ENCODE measurements at regions of chr3 and their contacts with region 1.

Region 1: DNA sequence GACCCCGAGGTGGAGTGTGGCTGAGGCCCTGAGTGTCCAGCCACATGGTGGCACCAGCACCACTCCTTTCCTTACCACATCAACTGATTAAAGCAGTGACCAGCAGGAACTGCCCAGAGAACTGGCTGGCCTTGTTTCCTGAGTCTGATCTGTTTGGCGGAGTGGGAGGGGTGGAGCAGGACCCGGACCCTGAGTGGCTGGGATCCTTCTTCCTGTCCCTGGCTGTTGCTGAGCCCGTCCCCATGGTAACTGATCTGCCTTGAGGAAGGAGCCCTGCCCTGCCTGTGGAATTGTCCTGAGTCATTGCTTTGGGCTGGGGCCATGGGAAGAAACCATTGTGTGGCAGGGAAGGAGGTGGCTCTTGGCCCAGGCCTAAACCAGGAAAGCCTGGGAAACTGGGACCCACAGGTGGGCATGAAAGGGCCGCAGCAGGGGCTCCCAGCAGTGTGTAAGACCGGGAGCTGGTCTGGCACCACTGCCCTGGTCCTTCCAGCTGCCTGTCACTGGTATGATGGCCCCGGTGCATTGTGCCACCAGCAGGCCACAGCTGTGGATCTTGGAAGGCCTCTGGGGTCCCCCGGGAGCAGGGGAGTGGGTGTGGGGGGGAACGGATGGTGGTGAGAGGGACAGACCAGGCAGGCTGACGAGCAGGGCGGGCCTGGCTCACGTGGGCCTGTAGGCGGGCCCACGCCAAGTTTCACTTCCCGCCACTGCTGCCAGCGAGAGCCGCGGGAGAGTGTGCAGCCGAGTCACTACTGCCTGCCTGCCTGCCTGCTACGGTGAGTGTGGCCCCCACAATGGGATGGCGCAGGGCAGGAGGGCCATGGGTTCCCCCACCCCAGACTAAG is 19.2 kb downstream of the ATRIP start:
- DNase-seq: peak; percentile 97
- H3K4me3 ChIP-seq: peak overlapping the region; percentile 45 to 68
- H3K27ac ChIP-seq: peak overlapping the region; percentile 99 to 100
- H3K4me1 ChIP-seq: peaks cover 16 to 67% of the 10 kb centered on the region in 2 experiments; a peak in 2 of 4 replicates
- H3K27me3 ChIP-seq: no peaks in the 10 kb centered on the region
- CTCF ChIP-seq: peak; percentile 79
- EP300 ChIP-seq: peak in 1 of 2 experiments; percentile 58; a peak in 3 of 4 replicates
- RAD21 ChIP-seq: peak; percentile 94

Region 2: GRCh38 chr3:48425218-48426075 is 40.3 kb before region 1 on chr3:
- CTCF ChIA-PET with region 1: no interaction called
- POLR2A ChIA-PET with region 1: no interaction called
- DNase-seq: peak; percentile 36
- H3K4me3 ChIP-seq: no peak overlapping the region
- H3K27ac ChIP-seq: no peak overlapping the region; a peak in 1 of 4 replicates
- H3K4me1 ChIP-seq: peaks cover 7 to 62% of the 10 kb centered on the region in 2 experiments; a peak in 2 of 4 replicates
- H3K27me3 ChIP-seq: no peaks in the 10 kb centered on the region
- CTCF ChIP-seq: no peak
- EP300 ChIP-seq: no peak
- RAD21 ChIP-seq: no peak

Region 3: DNA sequence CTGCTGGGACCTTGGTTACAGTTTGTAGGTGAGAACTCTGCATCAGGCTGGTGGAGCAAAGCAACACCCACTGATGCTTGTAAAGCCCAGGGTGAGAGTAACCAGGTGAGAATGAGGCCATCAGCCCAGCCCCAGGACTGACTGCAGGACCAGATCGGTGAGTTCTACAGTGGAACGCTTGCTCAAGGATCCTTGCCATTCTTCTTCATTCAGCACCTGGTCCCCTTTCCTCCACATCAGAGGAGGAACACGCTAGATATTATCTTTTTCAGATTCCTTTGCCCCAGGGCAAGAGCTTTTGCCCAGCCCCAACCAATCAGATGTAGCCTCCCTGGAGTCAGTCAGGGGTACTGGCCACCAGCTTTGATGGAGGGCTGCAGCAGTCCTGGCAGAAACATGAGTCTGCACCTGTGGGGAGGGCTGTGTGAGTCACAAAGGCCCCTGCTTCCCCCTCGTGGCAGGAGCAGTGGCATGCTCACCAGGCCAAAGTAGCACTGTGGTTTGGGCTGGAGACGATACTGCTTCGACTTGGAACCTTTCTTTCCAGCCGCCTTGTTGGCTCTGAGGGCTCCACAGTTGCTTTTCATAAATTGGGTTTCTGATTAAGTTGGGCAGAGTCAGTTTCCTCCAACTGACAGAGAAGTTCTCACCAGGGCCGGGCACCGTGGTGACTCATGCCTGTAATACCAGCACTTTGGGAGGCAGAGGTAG is 41.8 kb after region 1 on chr3:
- CTCF ChIA-PET with region 1: interaction called, 57 read pairs
- POLR2A ChIA-PET with region 1: interaction called, 7 read pairs
- DNase-seq: peak; percentile 86
- H3K4me3 ChIP-seq: 0 out of 4 replicates have a peak overlapping the region, but pooled peaks of 1 of the 2 experiments have one; percentile 1
- H3K27ac ChIP-seq: peak overlapping the region; percentile 29 to 58
- H3K4me1 ChIP-seq: peaks cover 14 to 30% of the 10 kb centered on the region in 2 experiments; a peak in 2 of 4 replicates
- H3K27me3 ChIP-seq: no peaks in the 10 kb centered on the region
- CTCF ChIP-seq: peak; percentile 58
- EP300 ChIP-seq: peak in 1 of 2 experiments; percentile 25; a peak in 1 of 4 replicates
- RAD21 ChIP-seq: peak; percentile 89

Region 4: GRCh38 chr3:48556793-48557626 is 91.3 kb after region 1 on chr3 and contains the start of gene PFKFB4:
- CTCF ChIA-PET with region 1: interaction called, 136 read pairs
- POLR2A ChIA-PET with region 1: no interaction called
- DNase-seq: peak; percentile 99
- H3K4me3 ChIP-seq: peak within 1 kb of the TSS; percentile 57 to 77
- H3K27ac ChIP-seq: peak within 1 kb of the TSS; percentile 48 to 49
- H3K4me1 ChIP-seq: peaks cover 29 to 61% of the 10 kb centered on the region in 2 experiments; a peak in 3 of 4 replicates
- H3K27me3 ChIP-seq: no peaks in the 10 kb centered on the region
- CTCF ChIP-seq: no peak
- EP300 ChIP-seq: no peak
- RAD21 ChIP-seq: no peak
- polyA plus RNA-seq, gene PFKFB4: 5.7 and 6.7 TPM in 2 replicates

Region 5: DNA sequence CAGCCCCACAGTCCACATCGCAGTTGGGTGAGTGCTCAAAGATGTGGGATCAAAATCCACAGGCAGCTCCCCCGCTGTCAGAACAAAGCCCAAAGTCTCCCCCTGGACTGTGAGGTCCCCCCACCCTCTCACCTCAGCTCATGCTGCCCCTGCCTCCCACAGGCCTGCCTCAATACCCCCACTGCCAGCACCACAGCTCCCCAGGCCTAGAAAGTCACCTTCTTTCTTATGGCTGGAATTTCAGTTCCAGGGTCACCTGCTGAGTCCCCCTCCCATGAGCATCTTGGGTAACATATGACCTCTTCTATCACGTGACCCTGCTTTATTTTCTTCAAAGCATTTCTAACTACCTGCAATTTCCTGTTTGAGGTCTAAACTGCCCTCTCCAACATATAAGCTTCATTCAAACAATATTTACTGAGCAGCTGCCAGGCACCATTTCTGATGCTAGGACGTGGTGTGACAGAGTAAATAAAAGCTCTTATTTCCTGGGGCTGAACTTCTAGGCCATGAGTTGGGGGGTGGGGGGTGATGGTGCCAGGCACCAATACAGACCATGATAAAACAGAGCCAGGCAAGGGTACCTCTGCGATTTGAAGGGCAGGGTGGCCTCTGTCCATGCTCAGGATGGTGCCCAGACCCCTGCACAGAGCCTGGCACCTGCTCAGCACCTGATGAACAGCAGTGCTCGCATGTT is 158.2 kb after region 1 on chr3:
- CTCF ChIA-PET with region 1: no interaction called
- POLR2A ChIA-PET with region 1: no interaction called
- DNase-seq: no peak
- H3K4me3 ChIP-seq: no peak overlapping the region
- H3K27ac ChIP-seq: no peak overlapping the region
- H3K4me1 ChIP-seq: no peaks in the 10 kb centered on the region
- H3K27me3 ChIP-seq: no peaks in the 10 kb centered on the region
- CTCF ChIP-seq: no peak
- EP300 ChIP-seq: no peak
- RAD21 ChIP-seq: no peak

Region 6: DNA sequence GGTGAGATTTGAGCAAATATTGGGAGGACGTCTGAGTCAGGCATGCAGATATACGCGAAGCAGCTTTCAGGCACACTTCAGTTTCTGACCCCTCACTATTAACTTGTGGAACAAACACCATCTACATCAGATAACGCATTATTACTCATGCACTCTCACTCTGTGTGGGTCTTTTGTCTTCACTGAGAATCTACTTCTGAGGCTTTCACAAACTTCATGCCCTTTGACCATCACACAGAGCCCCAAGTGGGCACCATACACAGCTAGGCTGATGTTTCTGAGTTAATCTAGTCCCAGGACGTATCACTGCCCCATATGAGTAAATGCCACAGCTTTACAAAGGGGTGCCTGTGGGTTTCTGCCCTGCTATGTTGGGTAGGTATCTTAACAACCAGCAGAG is 290.9 kb after region 1 on chr3:
- CTCF ChIA-PET with region 1: no interaction called
- POLR2A ChIA-PET with region 1: no interaction called
- DNase-seq: no peak
- H3K4me3 ChIP-seq: no peak overlapping the region
- H3K27ac ChIP-seq: no peak overlapping the region
- H3K4me1 ChIP-seq: no peaks in the 10 kb centered on the region
- H3K27me3 ChIP-seq: no peaks in the 10 kb centered on the region
- CTCF ChIP-seq: no peak
- EP300 ChIP-seq: no peak
- RAD21 ChIP-seq: no peak

Measured in SK-N-SH (cell line).